HepG2 (cell line): ENCODE measurements at regions of chr15 and their contacts with region 1.

Region 1: DNA sequence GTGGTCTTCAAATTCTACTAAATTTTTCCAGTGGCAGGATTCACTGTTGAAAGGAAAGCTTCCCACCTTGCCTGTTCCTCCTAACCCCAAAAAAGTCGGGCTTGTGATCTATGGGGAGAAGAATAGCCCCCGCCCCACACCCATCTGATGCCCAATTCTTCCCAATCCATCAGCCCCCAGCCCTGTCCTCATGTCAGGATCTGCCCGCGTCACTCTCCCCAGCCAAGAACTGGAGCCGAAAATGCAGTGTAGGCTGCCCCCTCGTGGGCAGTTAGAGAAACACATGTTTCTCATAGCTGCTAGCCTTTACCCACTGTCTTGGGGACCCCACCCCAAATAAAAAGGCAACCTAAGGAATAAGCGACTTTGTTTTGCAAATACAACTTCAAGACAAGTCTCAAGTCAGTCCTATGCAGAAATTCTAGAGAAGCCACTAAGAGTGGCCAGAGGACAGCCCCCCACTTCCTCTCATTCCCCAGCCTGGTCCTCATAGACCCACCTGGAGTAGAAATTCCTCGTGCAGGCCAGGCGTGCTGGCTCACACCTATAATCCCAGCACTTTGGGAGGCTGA is 13.0 kb upstream of the CSK start:
- DNase-seq: peak; percentile 55
- ATAC-seq: peak; percentile 31
- H3K4me3 ChIP-seq: peak overlapping the region; percentile 27 to 58 (median 44); a peak in 5 of 6 replicates
- H3K27ac ChIP-seq: no peak overlapping the region
- H3K4me1 ChIP-seq: peaks cover 36% of the 10 kb centered on the region
- H3K27me3 ChIP-seq: no peaks in the 10 kb centered on the region
- CTCF ChIP-seq: peak; percentile 93
- EP300 ChIP-seq: no peak
- POLR2A ChIP-seq: no peak
- RAD21 ChIP-seq: peak; percentile 87

Region 2: DNA sequence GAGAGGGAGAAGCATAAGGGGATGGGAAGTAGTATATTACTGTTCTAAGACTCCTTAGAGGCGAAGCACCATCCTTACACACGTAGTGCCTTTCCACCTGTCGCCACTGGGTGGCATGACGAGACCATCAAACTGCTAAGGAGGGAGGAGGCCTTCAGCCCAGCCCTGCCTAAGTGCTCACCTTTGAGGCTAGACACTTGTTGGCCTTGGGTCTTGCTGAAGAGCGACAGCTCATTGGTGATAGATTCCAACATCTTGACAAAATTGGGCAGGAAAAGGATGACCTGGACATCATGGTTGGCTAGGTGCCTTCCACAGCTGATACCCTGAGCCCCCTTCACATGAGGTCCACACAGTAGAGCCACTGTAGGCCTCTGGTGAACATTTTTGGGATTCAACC is 133.6 kb before region 1 on chr15:
- CTCF ChIA-PET with region 1: interaction called, 59 read pairs
- POLR2A ChIA-PET with region 1: interaction called, 9 read pairs
- in situ Hi-C with region 1: loop called (anchors 5 kb)
- intact Hi-C with region 1: loop called (anchors 1 kb)
- DNase-seq: peak; percentile 60
- ATAC-seq: peak; percentile 48
- H3K4me3 ChIP-seq: no peak overlapping the region
- H3K27ac ChIP-seq: no peak overlapping the region
- H3K4me1 ChIP-seq: peaks cover 20% of the 10 kb centered on the region
- H3K27me3 ChIP-seq: no peaks in the 10 kb centered on the region
- CTCF ChIP-seq: peak; percentile 95
- EP300 ChIP-seq: no peak
- POLR2A ChIP-seq: no peak
- RAD21 ChIP-seq: peak; percentile 88

Region 3: DNA sequence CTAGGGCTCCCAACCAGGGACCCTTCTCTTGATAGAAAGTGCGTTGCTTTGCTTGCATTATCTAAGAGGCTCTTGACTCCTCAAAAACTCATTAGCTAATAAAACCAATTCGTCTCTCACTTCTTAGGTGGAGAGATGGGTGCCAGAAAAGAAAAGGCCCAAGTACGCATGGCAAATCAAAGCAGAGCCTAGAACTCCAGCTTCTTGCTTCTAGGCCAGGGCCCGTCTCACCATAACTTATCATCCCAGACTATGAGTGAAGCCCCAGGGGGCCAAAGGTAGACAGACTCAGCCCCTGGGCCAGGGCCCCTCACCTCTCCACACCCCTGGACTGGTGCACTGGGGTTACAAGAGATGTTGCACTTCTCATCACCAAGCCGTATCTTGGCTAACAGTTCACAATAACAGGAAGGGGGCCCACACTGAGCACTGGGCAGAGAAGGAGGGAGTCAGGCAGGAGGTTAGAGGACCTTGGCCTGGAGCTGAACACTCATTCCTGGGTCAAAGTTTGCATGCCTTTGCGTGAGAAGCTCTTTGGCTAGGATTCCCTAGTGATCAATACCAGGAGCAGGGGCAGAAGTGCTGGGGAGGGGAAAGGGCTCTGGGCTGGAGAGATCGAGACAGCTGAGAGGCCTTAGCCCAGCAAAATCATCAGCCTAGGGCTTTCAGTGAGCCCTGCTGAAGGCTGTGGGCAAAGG is 38.1 kb before region 1 on chr15:
- CTCF ChIA-PET with region 1: no interaction called
- POLR2A ChIA-PET with region 1: interaction called, 13 read pairs
- in situ Hi-C with region 1: no loop called
- intact Hi-C with region 1: no loop called
- DNase-seq: peak; percentile 84
- ATAC-seq: peak; percentile 87
- H3K4me3 ChIP-seq: peak overlapping the region in 1 of 3 experiments; percentile 61; a peak in 2 of 6 replicates
- H3K27ac ChIP-seq: peak overlapping the region; percentile 84
- H3K4me1 ChIP-seq: peaks cover 68% of the 10 kb centered on the region
- H3K27me3 ChIP-seq: no peaks in the 10 kb centered on the region
- CTCF ChIP-seq: peak; percentile 28; the same call in 1 of the 2 replicates
- EP300 ChIP-seq: peak; percentile 75 to 90
- POLR2A ChIP-seq: peak in 1 of 2 experiments; percentile 26; a peak in 3 of 4 replicates
- RAD21 ChIP-seq: peak; percentile 22; the same call in 1 of the 2 replicates

Region 4: GRCh38 chr15:74787251-74788041 is 18.6 kb after region 1 on chr15:
- CTCF ChIA-PET with region 1: interaction called, 5 read pairs
- POLR2A ChIA-PET with region 1: interaction called, 21 read pairs
- in situ Hi-C with region 1: no loop called
- intact Hi-C with region 1: loop called (anchors 1 kb)
- DNase-seq: no peak
- ATAC-seq: peak; percentile 64
- H3K4me3 ChIP-seq: no peak overlapping the region
- H3K27ac ChIP-seq: no peak overlapping the region
- H3K4me1 ChIP-seq: peaks cover 52% of the 10 kb centered on the region
- H3K27me3 ChIP-seq: no peaks in the 10 kb centered on the region
- CTCF ChIP-seq: peak; percentile 41
- EP300 ChIP-seq: no peak
- POLR2A ChIP-seq: no peak
- RAD21 ChIP-seq: no peak

Region 5: DNA sequence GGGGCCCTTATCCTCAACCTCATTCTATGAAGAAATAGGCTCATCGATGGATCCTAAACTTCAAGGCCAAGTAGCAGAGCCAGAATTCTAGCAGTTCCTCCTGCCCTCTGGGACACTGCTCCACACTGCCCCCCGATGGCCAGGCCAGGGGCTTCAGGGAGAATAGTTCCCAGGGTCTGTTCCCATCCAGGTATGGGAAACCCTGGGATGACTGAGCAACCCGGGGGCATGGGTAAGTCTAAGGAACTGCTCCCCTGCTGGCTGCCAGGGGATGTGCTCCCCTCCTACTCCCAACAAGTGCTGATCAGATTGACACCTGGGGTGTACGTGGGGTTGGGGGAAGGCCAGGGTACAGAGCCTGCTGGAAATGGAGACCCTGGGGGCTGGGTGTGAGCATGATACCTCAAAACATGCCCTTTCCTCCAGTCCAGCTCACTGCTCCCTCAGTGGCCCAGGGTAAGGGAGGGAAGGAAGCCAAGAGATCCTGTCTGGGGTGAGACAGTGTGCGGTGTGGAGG is 66.5 kb after region 1 on chr15:
- CTCF ChIA-PET with region 1: interaction called, 4 read pairs
- POLR2A ChIA-PET with region 1: no interaction called
- in situ Hi-C with region 1: no loop called
- intact Hi-C with region 1: loop called (anchors 2 kb)
- DNase-seq: peak; percentile 70
- ATAC-seq: peak; percentile 86
- H3K4me3 ChIP-seq: no peak overlapping the region
- H3K27ac ChIP-seq: no peak overlapping the region
- H3K4me1 ChIP-seq: peaks cover 30% of the 10 kb centered on the region
- H3K27me3 ChIP-seq: peaks cover 0 to 11% of the 10 kb centered on the region in 2 experiments; a peak in 2 of 5 replicates
- CTCF ChIP-seq: peak; percentile 82
- EP300 ChIP-seq: no peak
- POLR2A ChIP-seq: no peak
- RAD21 ChIP-seq: peak; percentile 59